ENCODE measurements at regions of chrX and their contacts with region 1.

Region 1: GRCh38 chrX:68146054-68146453 is 287.2 kb downstream of the OPHN1 start:
- DNase-seq: peak; percentile 10
- ATAC-seq: peak; percentile 86
- H3K4me3 ChIP-seq: no peak overlapping the region
- H3K27ac ChIP-seq: no peak overlapping the region
- H3K4me1 ChIP-seq: no peaks in the 10 kb centered on the region
- H3K27me3 ChIP-seq: no peaks in the 10 kb centered on the region
- CTCF ChIP-seq: peak; percentile 7 to 29 (median 14); a peak in 2 of 6 replicates
- POLR2A ChIP-seq: no peak
- RAD21 ChIP-seq: peak; percentile 32; the same call in 1 of the 2 replicates

Region 2: GRCh38 chrX:67555578-67556203 is 590.4 kb before region 1 on chrX:
- CTCF ChIA-PET with region 1: no interaction called
- POLR2A ChIA-PET with region 1: no interaction called
- RAD21 ChIA-PET with region 1: no interaction called
- intact Hi-C with region 1: loop called (anchors 10 kb)
- DNase-seq: no peak
- ATAC-seq: no peak
- H3K4me3 ChIP-seq: no peak overlapping the region
- H3K27ac ChIP-seq: no peak overlapping the region
- H3K4me1 ChIP-seq: no peaks in the 10 kb centered on the region
- H3K27me3 ChIP-seq: no peaks in the 10 kb centered on the region
- CTCF ChIP-seq: peak in 2 of 3 experiments; percentile 53 to 55; a peak in 4 of 6 replicates
- POLR2A ChIP-seq: no peak
- RAD21 ChIP-seq: peak; percentile 21; the same call in 1 of the 2 replicates

Region 3: DNA sequence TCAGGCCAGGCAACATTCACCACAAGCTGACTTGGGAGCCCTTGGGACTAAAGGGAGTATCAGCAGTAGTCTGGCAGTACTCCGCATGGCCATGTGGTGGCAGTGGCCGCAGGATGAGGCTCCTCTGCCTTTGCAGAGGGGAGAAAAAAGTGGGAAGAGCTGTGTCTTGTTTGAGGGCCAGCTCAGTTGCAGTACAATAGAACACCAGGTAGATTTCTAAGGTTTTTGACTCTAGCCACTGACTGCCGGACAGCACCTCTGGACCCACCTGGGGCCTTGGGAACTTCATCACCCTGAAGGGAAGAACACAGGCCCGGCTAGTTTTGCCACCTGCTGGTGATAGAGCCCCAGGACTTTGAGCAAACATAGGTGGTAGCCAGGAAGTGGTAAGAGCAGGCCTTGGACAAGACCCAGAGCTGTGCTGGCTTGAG is 127.4 kb before region 1 on chrX:
- CTCF ChIA-PET with region 1: interaction called, 21 read pairs
- POLR2A ChIA-PET with region 1: no interaction called
- RAD21 ChIA-PET with region 1: interaction called in 1 of 2 experiments, 3 read pairs
- intact Hi-C with region 1: loop called (anchors 5 kb)
- DNase-seq: peak; percentile 10
- ATAC-seq: peak; percentile 90
- H3K4me3 ChIP-seq: no peak overlapping the region
- H3K27ac ChIP-seq: no peak overlapping the region
- H3K4me1 ChIP-seq: no peaks in the 10 kb centered on the region
- H3K27me3 ChIP-seq: no peaks in the 10 kb centered on the region
- CTCF ChIP-seq: peak; percentile 69 to 78 (median 72)
- POLR2A ChIP-seq: no peak
- RAD21 ChIP-seq: peak; percentile 46

Region 4: GRCh38 chrX:68061206-68061535 is 84.9 kb before region 1 on chrX:
- CTCF ChIA-PET with region 1: no interaction called
- POLR2A ChIA-PET with region 1: no interaction called
- RAD21 ChIA-PET with region 1: no interaction called
- intact Hi-C with region 1: no loop called
- DNase-seq: no peak
- ATAC-seq: no peak
- H3K4me3 ChIP-seq: no peak overlapping the region
- H3K27ac ChIP-seq: no peak overlapping the region
- H3K4me1 ChIP-seq: no peaks in the 10 kb centered on the region
- H3K27me3 ChIP-seq: no peaks in the 10 kb centered on the region
- CTCF ChIP-seq: no peak
- POLR2A ChIP-seq: no peak
- RAD21 ChIP-seq: no peak

Region 5: DNA sequence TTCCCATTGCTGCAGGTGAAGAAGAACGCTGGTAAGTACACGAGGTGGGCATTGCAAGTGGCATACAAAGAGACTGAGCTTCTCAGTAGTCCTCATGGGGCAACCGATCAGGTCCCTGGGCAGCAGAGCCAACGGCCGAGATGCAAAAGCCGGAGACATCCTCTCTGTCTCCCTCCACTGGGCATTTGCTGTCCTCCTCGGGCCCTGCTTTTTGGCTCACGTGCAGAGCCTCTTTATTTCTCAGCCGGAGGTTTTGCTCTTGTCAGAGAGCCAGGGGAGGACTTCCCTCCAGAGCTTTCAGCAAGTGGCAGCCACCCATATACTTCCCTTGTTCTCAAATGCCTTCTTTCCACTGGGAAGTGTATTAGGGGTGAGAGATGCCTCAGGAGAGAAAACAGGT is 519.4 kb after region 1 on chrX:
- CTCF ChIA-PET with region 1: no interaction called
- POLR2A ChIA-PET with region 1: no interaction called
- RAD21 ChIA-PET with region 1: no interaction called
- intact Hi-C with region 1: no loop called
- DNase-seq: no peak
- ATAC-seq: no peak
- H3K4me3 ChIP-seq: no peak overlapping the region
- H3K27ac ChIP-seq: no peak overlapping the region
- H3K4me1 ChIP-seq: no peaks in the 10 kb centered on the region
- H3K27me3 ChIP-seq: no peaks in the 10 kb centered on the region
- CTCF ChIP-seq: no peak
- POLR2A ChIP-seq: no peak
- RAD21 ChIP-seq: no peak

Region 6: GRCh38 chrX:69070949-69071650 is 925.0 kb after region 1 on chrX:
- CTCF ChIA-PET with region 1: no interaction called
- POLR2A ChIA-PET with region 1: no interaction called
- RAD21 ChIA-PET with region 1: no interaction called
- intact Hi-C with region 1: no loop called
- DNase-seq: no peak
- ATAC-seq: no peak
- H3K4me3 ChIP-seq: no peak overlapping the region
- H3K27ac ChIP-seq: no peak overlapping the region
- H3K4me1 ChIP-seq: no peaks in the 10 kb centered on the region
- H3K27me3 ChIP-seq: no peaks in the 10 kb centered on the region
- CTCF ChIP-seq: no peak
- POLR2A ChIP-seq: no peak
- RAD21 ChIP-seq: no peak

Region 7: DNA sequence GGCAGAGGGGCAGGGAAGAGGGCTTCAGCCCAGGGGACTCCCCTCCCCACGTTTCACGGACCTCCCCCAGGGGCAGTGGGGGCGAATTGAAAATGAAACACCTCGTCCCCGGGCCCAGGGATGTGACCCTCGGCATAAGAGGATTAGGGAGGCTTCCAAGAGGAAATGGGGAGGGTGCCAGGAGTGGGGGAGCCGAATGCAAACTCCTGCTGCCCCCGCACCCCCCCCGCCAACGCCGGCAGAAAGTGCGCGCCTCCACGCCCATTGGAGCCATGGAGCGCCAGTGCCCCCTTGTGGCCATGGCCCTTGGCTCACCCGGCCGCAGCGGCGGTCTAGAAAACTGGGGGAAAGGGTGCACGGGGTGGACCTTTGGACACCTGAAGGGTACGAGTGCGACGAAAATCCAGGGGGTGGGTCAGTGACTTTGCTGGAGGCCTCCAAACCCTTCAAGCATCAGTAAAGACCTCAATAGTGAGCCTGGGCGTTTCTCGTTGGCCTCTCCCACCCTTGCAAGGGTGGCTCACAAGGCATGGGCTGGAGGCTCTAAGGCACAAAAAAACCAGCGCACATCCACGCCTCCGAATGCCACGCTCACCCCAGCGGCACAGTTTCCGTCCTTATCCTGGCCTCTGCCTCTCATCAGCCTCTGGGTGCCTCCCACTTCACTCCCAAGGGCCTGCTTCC is 1140.0 kb after region 1 on chrX:
- CTCF ChIA-PET with region 1: no interaction called
- POLR2A ChIA-PET with region 1: no interaction called
- RAD21 ChIA-PET with region 1: no interaction called
- intact Hi-C with region 1: no loop called
- DNase-seq: peak; percentile 0
- ATAC-seq: peak; percentile 92
- H3K4me3 ChIP-seq: peak overlapping the region; percentile 13 to 16; a peak in 3 of 4 replicates
- H3K27ac ChIP-seq: no peak overlapping the region
- H3K4me1 ChIP-seq: no peaks in the 10 kb centered on the region; a peak in 1 of 4 replicates
- H3K27me3 ChIP-seq: no peaks in the 10 kb centered on the region
- CTCF ChIP-seq: peak; percentile 59 to 79 (median 74); a peak in 5 of 6 replicates
- POLR2A ChIP-seq: no peak
- RAD21 ChIP-seq: peak; percentile 85